Common myeloid progenitor, CD34-positive (primary cell): ENCODE measurements at regions of chr6 and their contacts with region 1.

Region 1: GRCh38 chr6:131914967-131915751 is 36.0 kb downstream of the CCN2 start:
- DNase-seq: peak; percentile 81 to 91 (median 87)
- H3K4me3 ChIP-seq: no peak overlapping the region
- H3K27ac ChIP-seq: no peak overlapping the region
- H3K4me1 ChIP-seq: peaks cover 11 to 22% (median 20%) of the 10 kb centered on the region in 4 experiments
- H3K27me3 ChIP-seq: peaks cover 10 to 70% (median 15%) of the 10 kb centered on the region in 5 experiments

Region 2: DNA sequence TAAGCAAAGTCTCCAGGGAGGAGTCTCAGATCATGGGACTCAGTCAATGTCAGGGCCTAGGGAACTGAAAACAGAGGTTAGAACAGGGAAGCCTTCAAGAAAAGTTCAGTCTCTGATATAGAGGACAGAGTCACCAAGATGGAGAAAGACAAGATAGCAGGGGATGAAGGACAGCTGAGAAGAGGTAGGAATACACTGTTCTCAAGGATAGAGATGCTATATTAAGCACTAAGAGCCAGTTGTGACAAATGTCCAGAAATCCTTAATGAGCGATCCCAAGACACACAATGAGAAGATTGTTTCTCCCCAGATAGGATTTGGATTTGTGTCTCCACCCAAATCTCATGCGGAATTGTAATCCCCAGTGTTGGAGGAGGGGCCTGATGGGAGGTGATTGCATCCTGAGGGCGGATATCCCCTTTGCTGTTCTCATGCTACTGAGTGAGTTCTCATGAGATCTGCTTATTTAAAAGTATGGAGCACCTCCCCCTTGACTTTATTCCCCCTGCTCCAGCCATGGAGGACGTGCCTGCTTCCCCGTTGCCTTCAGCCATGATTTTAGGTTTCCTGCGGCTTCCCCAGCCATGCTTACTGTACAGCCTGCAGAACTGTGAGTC is 611.7 kb before region 1 on chr6:
- CTCF ChIA-PET with region 1: no interaction called
- POLR2A ChIA-PET with region 1: no interaction called
- DNase-seq: no peak
- H3K4me3 ChIP-seq: no peak overlapping the region
- H3K27ac ChIP-seq: no peak overlapping the region
- H3K4me1 ChIP-seq: peaks cover 0 to 6% (median 0%) of the 10 kb centered on the region in 4 experiments
- H3K27me3 ChIP-seq: no peaks in the 10 kb centered on the region

Region 3: DNA sequence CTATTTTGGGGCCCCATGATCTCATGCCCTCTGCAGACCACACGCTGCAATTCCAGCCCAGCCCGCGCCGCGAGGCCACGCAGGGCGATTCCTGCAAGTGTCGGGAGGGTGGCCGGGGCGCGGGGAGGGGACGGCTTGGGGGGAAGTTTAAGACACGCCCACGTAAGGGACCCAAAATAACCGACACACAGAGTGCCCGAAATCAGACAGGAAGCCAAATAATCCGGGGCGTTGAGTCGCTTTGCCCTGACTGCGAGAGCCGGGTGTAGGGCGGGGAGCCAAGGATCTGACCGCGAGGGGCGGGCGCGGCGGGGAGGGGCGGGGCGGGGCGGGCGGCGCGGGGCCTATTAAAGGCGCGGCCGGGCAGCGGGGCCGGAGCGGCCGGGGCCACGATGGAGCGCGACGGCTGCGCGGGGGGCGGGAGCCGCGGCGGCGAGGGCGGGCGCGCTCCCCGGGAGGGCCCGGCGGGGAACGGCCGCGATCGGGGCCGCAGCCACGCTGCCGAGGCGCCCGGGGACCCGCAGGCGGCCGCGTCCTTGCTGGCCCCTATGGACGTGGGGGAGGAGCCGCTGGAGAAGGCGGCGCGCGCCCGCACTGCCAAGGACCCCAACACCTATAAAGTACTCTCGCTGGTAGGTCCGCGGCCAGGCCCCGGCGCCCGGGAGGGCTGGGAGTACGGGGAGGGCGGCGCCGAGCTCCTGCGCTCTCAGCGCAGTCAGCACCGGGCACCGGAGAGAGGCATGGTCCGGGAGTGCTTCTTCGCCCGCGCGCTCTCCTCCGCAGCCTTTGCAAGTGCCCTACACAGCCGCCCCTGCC is 107.3 kb before region 1 on chr6 and contains the start of gene ENPP1:
- CTCF ChIA-PET with region 1: no interaction called
- POLR2A ChIA-PET with region 1: no interaction called
- DNase-seq: peak; percentile 58 to 75 (median 65)
- H3K4me3 ChIP-seq: peak within 1 kb of the TSS; percentile 14 to 73 (median 58)
- H3K27ac ChIP-seq: no peak within 1 kb of the TSS
- H3K4me1 ChIP-seq: peaks cover 4 to 12% (median 10%) of the 10 kb centered on the region in 4 experiments
- H3K27me3 ChIP-seq: peaks cover 15 to 67% (median 33%) of the 10 kb centered on the region in 5 experiments

Region 4: DNA sequence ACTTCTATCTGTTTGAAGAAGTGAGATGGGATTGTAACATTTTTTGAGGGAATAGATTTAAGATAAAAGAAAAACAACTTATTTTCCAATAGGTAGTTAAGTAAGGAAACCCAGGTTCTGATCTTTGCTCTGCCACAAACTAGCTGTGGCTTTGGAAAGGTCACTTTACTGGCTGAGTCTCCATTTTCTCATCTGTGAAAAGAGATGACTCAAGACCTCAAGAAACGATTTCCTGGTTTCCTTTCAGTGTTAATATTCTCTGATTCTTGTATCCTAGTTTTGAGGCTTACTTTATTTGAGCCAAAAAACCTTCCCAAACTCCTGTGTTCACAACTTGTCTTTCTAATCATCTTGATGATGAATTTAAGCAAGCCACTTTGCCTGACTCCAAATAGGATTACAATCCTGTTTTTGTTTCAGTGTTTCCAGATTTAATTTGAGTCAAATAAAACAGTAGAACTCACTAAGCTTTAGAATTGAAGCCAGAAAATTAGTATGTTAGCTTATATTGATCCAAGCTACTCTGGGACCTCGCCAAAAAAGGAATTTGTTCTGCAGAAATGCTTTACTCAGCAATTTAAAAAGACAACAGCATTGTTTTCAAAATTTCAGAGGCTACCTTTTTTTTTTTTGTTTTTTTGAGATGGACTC is 56.3 kb before region 1 on chr6:
- CTCF ChIA-PET with region 1: no interaction called
- POLR2A ChIA-PET with region 1: no interaction called
- DNase-seq: no peak
- H3K4me3 ChIP-seq: no peak overlapping the region
- H3K27ac ChIP-seq: no peak overlapping the region
- H3K4me1 ChIP-seq: peaks cover 0 to under 1% (median 0%) of the 10 kb centered on the region in 4 experiments
- H3K27me3 ChIP-seq: peaks cover 0 to 4% (median 0%) of the 10 kb centered on the region in 5 experiments

Region 5: DNA sequence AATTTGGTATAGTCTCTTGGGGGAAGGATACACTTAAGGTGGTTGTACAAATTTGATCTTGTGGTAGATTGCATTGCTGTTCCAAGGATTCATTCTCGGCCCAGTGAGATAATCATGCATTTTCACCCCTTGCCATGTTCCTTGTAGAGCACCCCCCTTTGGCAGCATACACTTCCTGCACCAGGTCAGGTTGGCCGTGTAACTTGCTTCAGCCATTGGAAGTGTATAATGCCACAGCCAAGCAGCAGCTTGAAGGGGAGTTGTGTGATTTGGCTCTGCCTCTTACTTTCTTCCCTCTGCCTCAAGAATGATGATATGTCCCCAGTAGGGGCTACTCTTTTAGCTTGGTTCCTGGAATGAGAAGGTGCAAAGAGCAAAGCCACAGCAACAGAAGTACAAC is 14.1 kb after region 1 on chr6:
- CTCF ChIA-PET with region 1: interaction called, 43 read pairs
- POLR2A ChIA-PET with region 1: no interaction called
- DNase-seq: peak in 1 of 3 donors; percentile 17
- H3K4me3 ChIP-seq: no peak overlapping the region
- H3K27ac ChIP-seq: no peak overlapping the region
- H3K4me1 ChIP-seq: no peaks in the 10 kb centered on the region
- H3K27me3 ChIP-seq: peaks cover 0 to 44% (median 22%) of the 10 kb centered on the region in 5 experiments

Region 6: DNA sequence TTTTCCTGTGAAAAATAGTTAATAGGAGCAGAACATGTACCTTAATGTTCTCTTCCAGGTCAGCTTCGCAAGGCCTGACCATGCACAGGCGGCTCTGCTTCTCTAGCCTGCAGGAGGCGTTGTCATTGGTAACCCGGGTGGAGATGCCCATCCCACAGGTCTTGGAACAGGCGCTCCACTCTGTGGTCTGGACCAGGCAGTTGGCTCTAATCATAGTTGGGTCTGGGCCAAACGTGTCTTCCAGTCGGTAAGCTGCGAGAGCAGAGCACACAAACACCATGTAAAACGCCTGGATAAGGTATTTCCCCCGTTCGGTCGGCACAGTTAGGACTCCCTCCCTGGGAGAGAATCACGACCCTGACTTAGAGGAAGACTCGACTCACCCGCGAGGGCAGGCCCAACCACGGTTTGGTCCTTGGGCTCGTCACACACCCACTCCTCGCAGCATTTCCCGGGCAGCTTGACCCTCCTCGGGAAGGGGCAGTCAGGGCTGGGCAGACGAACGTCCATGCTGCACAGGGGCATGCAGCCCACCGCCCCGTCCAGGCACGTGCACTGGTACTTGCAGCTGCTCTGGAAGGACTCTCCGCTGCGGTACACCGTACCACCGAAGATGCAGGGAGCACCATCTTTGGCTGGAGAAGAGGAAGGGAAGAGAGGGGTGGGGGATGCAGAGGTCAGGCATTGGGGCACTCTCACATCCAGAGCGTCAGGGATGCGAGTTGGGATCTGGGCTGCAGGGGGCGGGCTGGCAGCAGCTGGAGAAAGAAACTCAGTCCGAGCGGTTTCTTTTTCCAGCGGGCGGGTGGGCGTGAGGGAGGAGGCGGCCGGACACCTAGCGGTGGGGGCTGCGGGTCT is 35.0 kb after region 1 on chr6:
- CTCF ChIA-PET with region 1: interaction called, 19 read pairs
- POLR2A ChIA-PET with region 1: interaction called, 3 read pairs
- DNase-seq: peak; percentile 40 to 67 (median 56)
- H3K4me3 ChIP-seq: peak overlapping the region; percentile 21 to 74 (median 64)
- H3K27ac ChIP-seq: no peak overlapping the region
- H3K4me1 ChIP-seq: peaks cover 0 to 17% (median 15%) of the 10 kb centered on the region in 4 experiments
- H3K27me3 ChIP-seq: peaks cover 14 to 93% (median 45%) of the 10 kb centered on the region in 5 experiments

Region 7: GRCh38 chr6:132067286-132067685 is 152.1 kb after region 1 on chr6:
- CTCF ChIA-PET with region 1: no interaction called
- POLR2A ChIA-PET with region 1: no interaction called
- DNase-seq: peak in 2 of 3 donors; percentile 7 to 41
- H3K4me3 ChIP-seq: no peak overlapping the region
- H3K27ac ChIP-seq: no peak overlapping the region
- H3K4me1 ChIP-seq: no peaks in the 10 kb centered on the region
- H3K27me3 ChIP-seq: no peaks in the 10 kb centered on the region

Region 8: GRCh38 chr6:132218059-132218696 is 303.0 kb after region 1 on chr6:
- CTCF ChIA-PET with region 1: interaction called, 23 read pairs
- POLR2A ChIA-PET with region 1: interaction called, 3 read pairs
- DNase-seq: peak; percentile 14 to 55 (median 51)
- H3K4me3 ChIP-seq: no peak overlapping the region
- H3K27ac ChIP-seq: no peak overlapping the region
- H3K4me1 ChIP-seq: no peaks in the 10 kb centered on the region
- H3K27me3 ChIP-seq: peaks cover 0 to 17% (median 0%) of the 10 kb centered on the region in 5 experiments

Region 9: DNA sequence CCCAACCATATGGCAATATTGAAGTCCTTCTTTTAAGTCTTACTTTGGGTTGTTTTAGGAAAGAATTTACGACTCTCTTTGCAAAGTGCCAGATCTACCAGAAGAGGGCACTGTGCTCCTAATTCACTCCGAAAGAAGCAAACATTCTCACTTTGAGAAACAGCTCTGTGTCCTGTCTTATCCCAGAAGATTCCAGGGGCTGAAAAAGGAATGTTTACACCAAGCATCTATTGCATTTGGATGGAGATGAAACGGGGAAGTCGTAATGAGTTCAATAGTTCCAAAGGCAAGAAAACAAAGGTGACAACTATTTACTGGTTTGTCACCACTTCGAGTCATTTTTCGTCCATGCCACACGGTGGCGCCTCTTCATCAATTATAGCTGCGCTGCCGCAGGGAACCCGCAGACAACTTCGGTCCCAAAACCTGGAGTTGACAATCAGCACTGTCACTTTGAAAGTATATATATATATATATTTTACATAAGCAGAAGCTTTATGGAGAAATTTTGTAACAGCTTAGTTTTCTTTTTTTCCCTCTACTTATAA is 364.5 kb after region 1 on chr6:
- CTCF ChIA-PET with region 1: interaction called, 16 read pairs
- POLR2A ChIA-PET with region 1: no interaction called
- DNase-seq: peak; percentile 77 to 87 (median 85)
- H3K4me3 ChIP-seq: peak overlapping the region in 6 of 7 experiments; percentile 61 to 95 (median 70)
- H3K27ac ChIP-seq: no peak overlapping the region
- H3K4me1 ChIP-seq: peaks cover 0 to 3% (median under 1%) of the 10 kb centered on the region in 4 experiments
- H3K27me3 ChIP-seq: peaks cover 0 to 9% (median 0%) of the 10 kb centered on the region in 5 experiments